Caco-2 (cell line): ENCODE measurements at regions of chr13 and their contacts with region 1.

Region 1: DNA sequence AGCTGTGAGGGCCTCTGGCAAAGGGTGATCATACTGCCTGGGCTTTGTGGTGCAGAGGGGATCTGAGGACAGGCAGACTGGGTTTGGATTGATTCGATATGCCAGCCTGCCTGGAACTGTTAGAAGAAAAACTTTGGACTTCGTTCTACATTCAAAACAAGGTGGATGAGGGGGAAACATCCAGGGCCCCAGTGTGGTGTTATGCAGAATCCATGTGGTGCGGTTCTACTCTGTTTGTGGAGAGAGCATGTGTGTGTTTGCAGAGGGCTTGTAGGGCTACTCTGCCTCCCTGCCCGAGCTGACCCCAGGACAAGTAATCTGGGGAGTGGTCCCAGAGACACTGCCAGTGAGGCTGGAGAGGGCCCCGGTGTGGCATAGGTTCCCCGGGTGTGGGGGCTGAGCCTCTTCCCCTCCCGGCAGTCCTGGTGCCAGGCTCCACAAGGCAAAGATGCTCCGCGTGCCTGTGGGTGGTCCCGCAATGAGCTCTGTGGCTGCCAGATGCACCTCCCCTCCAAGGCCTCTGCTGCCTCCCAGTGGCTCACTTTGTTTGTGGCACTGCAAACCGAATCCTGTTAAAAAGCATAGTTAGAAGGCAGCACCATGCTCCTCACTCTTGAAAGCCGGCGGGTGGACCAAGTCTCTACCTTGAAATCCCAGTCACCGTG is 22.3 kb upstream of the TFDP1 start:
- DNase-seq: peak; percentile 73 to 75
- H3K4me3 ChIP-seq: no peak overlapping the region
- H3K4me3 Mint-ChIP-seq: no peak overlapping the region
- H3K27ac Mint-ChIP-seq: no peak overlapping the region
- H3K4me1 ChIP-seq: no peaks in the 10 kb centered on the region; the same call in 1 of the 2 replicates
- H3K4me1 Mint-ChIP-seq: no peaks in the 10 kb centered on the region
- H3K27me3 ChIP-seq: no peaks in the 10 kb centered on the region
- H3K27me3 Mint-ChIP-seq: peaks cover 11% of the 10 kb centered on the region
- CTCF ChIP-seq: peak; percentile 63 to 89

Region 2: DNA sequence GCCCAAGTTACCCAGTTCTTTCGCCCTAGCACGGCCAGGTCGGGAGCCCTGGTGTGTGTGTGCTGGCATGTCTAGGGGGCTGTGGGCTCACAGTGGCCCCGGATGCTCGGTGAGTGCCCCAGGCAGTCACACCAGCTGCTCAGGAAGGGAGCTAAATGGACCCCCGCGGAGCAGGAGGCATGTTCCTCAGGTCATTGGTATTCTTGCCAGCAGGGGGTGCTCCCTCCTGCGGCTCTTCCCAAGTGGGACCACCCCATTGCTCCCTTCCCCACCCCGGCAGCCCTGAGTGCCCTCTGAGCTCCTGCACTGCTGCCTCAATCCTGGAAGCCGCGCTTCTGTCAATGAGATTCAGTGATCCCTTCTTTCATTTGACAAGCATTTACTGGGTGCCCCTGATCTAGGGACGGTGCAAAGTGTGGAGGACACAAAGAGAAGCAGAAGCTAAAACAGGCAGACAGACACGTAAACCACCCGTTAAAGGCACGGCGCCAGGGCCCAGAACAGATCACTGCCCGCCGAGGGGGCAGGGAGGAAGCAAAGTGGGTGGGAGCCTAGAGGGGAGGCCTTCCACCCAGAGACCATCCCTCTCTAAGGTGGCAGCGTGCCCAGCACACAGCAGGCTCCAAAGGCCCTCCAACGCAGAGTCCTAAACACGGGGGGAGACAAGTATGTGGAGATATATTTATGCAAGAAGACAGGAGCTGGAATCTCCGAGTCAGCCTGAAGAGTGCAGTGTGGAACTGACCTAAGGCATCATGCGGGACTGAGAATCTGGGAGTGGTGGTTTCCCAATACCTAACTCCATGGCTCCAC is 103.8 kb before region 1 on chr13:
- CTCF ChIA-PET with region 1: interaction called, 15 read pairs
- POLR2A ChIA-PET with region 1: no interaction called
- intact Hi-C with region 1: loop called (anchors 2 kb)
- DNase-seq: no peak
- H3K4me3 ChIP-seq: no peak overlapping the region
- H3K4me3 Mint-ChIP-seq: no peak overlapping the region
- H3K27ac Mint-ChIP-seq: no peak overlapping the region
- H3K4me1 ChIP-seq: 0 out of 2 replicates have a peak, but pooled peaks cover 3% of the 10 kb centered on the region
- H3K4me1 Mint-ChIP-seq: no peaks in the 10 kb centered on the region
- H3K27me3 ChIP-seq: no peaks in the 10 kb centered on the region
- H3K27me3 Mint-ChIP-seq: no peaks in the 10 kb centered on the region
- CTCF ChIP-seq: peak; percentile 41 to 59

Region 3: DNA sequence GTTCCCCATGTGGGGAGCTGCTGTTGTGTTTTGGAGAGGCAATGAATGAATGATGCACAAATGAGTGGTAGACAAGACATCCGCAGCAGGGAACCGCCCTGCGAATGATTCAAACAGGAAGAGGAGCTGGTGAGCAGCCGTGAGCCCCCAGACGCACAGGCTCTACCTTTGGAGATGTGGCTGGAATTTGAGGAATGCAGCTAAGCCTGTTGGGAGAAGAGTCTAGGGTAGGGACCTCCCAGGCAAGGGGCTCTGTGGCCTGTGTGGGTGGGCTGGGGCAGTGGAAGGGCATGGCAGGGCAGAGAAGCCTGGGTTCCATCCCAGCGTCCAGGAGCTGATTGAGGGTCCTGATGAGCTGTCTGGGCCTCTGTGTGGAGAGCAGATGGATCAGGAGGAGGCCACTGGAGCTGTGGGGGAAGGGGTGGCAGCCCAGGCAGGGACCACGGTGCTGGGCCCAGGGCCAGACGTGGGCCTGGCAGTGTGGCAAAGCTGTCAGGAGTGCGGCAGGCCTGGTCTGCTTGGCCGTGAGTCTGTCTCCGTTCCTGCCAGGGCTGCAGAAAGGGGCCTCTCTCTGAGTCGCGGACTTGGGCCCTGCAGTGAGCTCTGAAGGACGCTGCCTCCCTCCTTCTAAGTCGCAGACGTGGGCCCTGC is 29.9 kb before region 1 on chr13:
- CTCF ChIA-PET with region 1: interaction called, 14 read pairs
- POLR2A ChIA-PET with region 1: no interaction called
- intact Hi-C with region 1: no loop called
- DNase-seq: peak; percentile 80 to 84
- H3K4me3 ChIP-seq: no peak overlapping the region
- H3K4me3 Mint-ChIP-seq: peak overlapping the region; percentile 46
- H3K27ac Mint-ChIP-seq: peak overlapping the region; percentile 98
- H3K4me1 ChIP-seq: peaks cover 24% of the 10 kb centered on the region
- H3K4me1 Mint-ChIP-seq: peaks cover 24% of the 10 kb centered on the region
- H3K27me3 ChIP-seq: no peaks in the 10 kb centered on the region
- H3K27me3 Mint-ChIP-seq: no peaks in the 10 kb centered on the region
- CTCF ChIP-seq: no peak